Activated CD8-positive, alpha-beta T cell treated with anti-CD3 and anti-CD28 coated beads for 36 hours (primary cell): ENCODE measurements at regions of chr1 and their contacts with region 1.

Region 1: DNA sequence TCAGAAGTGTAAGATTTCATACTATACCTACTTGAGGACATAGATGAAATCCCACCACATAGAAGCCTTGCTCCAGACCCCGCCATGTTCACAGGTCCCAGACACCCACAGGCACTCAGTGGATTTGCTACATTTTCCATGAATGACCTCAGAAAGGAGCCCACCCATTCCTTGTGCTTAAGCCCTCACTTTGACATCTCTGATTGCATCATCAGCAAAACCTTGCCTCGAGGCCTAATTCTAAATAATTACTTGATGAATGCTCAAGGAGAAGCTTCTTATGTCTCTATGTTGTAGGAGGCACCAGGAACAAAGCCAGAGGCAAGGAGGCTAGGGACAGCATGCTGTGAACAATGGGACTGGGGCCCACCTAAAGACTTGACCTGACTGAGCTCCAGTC is 12.1 kb downstream of the OVGP1 start:
- DNase-seq: no peak
- ATAC-seq: no peak
- H3K4me3 Mint-ChIP-seq: no peak overlapping the region
- H3K27ac Mint-ChIP-seq: no peak overlapping the region
- H3K4me1 Mint-ChIP-seq: no peaks in the 10 kb centered on the region
- H3K27me3 Mint-ChIP-seq: no peaks in the 10 kb centered on the region
- CTCF ChIP-seq: no peak

Region 2: GRCh38 chr1:111399792-111400610 is 15.5 kb before region 1 on chr1:
- CTCF ChIA-PET with region 1: interaction called, 20 read pairs
- POLR2A ChIA-PET with region 1: interaction called, 3 read pairs
- intact Hi-C with region 1: no loop called
- DNase-seq: peak; percentile 60
- ATAC-seq: no peak
- H3K4me3 Mint-ChIP-seq: no peak overlapping the region
- H3K27ac Mint-ChIP-seq: no peak overlapping the region
- H3K4me1 Mint-ChIP-seq: peaks cover 18% of the 10 kb centered on the region
- H3K27me3 Mint-ChIP-seq: no peaks in the 10 kb centered on the region
- CTCF ChIP-seq: peak; percentile 83

Region 3: GRCh38 chr1:111619635-111620440 is 204.4 kb after region 1 on chr1 and contains the start of gene RAP1A:
- CTCF ChIA-PET with region 1: no interaction called
- POLR2A ChIA-PET with region 1: no interaction called
- intact Hi-C with region 1: no loop called
- DNase-seq: peak; percentile 97
- ATAC-seq: peak; percentile 79
- H3K4me3 Mint-ChIP-seq: peak within 1 kb of the TSS; percentile 99
- H3K27ac Mint-ChIP-seq: peak within 1 kb of the TSS; percentile 96
- H3K4me1 Mint-ChIP-seq: peaks cover 63% of the 10 kb centered on the region
- H3K27me3 Mint-ChIP-seq: no peaks in the 10 kb centered on the region
- CTCF ChIP-seq: no peak
- total RNA-seq, gene RAP1A: 197 to 198 TPM